ENCODE measurements at regions of chr14 and their contacts with region 1.

Region 1: DNA sequence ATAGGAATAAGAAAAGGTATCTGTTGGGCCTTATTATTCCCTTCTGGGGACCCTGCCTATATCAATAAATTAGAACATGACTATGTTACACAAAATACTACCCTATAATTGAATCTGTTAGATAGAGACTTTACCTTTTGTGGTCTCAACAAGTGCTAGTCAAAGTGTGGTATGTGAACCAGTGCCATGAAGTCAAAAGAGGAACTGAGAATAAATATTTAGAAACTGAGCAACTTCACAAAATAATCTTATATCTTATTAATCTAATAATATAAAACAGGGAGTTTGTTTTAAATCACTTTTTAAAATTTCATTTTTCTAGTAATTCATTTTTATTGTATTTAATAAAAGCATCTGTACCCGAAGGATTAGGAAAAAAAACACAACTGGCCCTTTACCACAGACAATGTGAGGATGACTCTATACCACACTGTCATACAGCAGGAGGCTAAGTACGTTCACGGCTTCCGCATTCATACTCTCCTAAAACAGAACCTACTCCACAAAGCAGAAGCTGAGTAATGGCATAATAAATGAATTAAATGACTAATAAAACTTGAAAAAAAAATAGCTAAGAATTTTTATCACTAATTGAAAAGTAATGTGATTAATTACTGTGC is 42.1 kb downstream of the SEC23A start:
- DNase-seq: no peak
- ATAC-seq: peak; percentile 98
- H3K4me3 Mint-ChIP-seq: peak overlapping the region; percentile 47
- H3K27ac Mint-ChIP-seq: peak overlapping the region; percentile 85
- H3K4me1 Mint-ChIP-seq: peaks cover 21% of the 10 kb centered on the region
- H3K27me3 Mint-ChIP-seq: no peaks in the 10 kb centered on the region
- CTCF ChIP-seq: no peak

Region 2: DNA sequence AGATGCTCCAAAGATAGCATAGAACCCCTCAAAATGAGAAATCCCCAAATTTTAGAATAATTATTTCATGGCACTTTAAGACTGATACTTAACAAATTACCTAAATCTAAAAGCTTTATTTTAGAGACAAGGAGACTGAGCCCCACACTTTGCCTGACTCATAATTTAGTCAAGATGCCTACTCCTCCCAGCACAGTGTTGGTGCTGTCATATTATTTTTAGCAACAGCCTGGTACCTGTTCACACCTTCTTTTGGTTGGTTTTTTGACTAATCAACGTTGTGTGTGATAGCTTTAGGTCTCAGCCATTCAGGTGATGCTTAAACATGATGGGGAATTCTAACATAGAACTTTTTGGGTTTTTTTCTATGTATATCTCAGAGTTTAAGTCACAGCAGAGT is 78.1 kb before region 1 on chr14:
- CTCF ChIA-PET with region 1: no interaction called
- POLR2A ChIA-PET with region 1: no interaction called
- intact Hi-C with region 1: no loop called
- DNase-seq: no peak
- ATAC-seq: no peak
- H3K4me3 Mint-ChIP-seq: no peak overlapping the region
- H3K27ac Mint-ChIP-seq: no peak overlapping the region
- H3K4me1 Mint-ChIP-seq: no peaks in the 10 kb centered on the region
- H3K27me3 Mint-ChIP-seq: peaks cover 14% of the 10 kb centered on the region
- CTCF ChIP-seq: no peak

Region 3: DNA sequence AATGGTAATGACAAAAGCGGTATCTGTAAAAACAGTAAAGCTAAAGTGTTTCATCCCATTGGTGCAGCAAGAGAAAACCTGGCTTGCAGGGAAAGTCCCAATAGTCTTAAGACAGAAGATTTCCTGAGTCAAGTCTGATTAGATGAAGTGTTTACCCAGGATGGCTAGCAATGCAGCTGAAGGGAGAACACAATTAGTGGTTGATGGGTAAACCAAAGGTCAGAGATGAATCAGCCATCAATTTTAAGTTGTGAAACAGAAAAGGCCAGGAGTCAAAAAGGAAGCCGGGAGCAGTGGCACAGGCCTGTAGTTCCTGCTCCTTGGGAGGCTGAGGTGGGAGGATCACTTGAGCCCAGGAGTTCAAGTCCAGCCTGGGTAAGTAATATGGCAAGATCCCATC is 10.5 kb before region 1 on chr14:
- CTCF ChIA-PET with region 1: no interaction called
- POLR2A ChIA-PET with region 1: no interaction called
- intact Hi-C with region 1: loop called (anchors 1 kb)
- DNase-seq: no peak
- ATAC-seq: no peak
- H3K4me3 Mint-ChIP-seq: no peak overlapping the region
- H3K27ac Mint-ChIP-seq: no peak overlapping the region
- H3K4me1 Mint-ChIP-seq: peaks cover 3% of the 10 kb centered on the region
- H3K27me3 Mint-ChIP-seq: no peaks in the 10 kb centered on the region
- CTCF ChIP-seq: no peak

Region 4: DNA sequence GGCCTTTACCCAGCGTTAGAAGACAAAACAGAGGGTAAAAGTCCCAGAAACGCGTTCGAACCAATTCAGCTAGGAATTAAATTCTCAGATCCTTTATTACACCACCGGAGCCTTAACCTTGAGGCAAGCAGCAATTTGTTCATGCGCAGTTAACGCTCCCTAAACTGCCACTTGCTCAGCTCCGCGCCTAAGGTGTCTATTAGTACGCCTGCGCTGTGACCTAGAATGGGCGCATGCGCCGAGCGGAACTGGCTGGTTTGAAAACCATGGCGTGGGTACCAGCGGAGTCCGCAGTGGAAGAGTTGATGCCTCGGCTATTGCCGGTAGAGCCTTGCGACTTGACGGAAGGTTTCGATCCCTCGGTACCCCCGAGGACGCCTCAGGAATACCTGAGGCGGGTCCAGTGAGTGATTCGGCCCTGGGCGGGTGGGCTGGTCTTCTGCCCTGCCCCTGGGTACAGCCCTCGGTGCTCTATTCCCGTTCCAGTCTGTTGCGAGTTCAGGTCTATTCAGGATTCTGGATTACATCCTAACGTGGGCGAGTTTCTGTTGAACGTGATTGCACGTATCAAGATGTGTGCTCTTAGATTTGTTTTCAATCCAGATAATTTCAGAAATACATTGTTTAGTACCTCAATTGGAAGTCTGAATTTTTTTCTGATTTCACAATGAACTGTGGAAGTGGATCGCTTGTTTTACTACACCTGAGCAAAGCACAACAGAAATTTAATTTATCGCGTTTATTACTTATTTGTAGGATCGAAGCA is 53.3 kb after region 1 on chr14 and contains the start of gene GEMIN2:
- CTCF ChIA-PET with region 1: no interaction called
- POLR2A ChIA-PET with region 1: no interaction called
- intact Hi-C with region 1: loop called (anchors 2 kb)
- DNase-seq: peak; percentile 83
- ATAC-seq: peak; percentile 99
- H3K4me3 Mint-ChIP-seq: peak within 1 kb of the TSS; percentile 98
- H3K27ac Mint-ChIP-seq: peak within 1 kb of the TSS; percentile 95
- H3K4me1 Mint-ChIP-seq: peaks cover 28% of the 10 kb centered on the region
- H3K27me3 Mint-ChIP-seq: no peaks in the 10 kb centered on the region
- CTCF ChIP-seq: no peak
- total RNA-seq, gene GEMIN2: 12.3 and 12.6 TPM in 2 replicates

Region 5: DNA sequence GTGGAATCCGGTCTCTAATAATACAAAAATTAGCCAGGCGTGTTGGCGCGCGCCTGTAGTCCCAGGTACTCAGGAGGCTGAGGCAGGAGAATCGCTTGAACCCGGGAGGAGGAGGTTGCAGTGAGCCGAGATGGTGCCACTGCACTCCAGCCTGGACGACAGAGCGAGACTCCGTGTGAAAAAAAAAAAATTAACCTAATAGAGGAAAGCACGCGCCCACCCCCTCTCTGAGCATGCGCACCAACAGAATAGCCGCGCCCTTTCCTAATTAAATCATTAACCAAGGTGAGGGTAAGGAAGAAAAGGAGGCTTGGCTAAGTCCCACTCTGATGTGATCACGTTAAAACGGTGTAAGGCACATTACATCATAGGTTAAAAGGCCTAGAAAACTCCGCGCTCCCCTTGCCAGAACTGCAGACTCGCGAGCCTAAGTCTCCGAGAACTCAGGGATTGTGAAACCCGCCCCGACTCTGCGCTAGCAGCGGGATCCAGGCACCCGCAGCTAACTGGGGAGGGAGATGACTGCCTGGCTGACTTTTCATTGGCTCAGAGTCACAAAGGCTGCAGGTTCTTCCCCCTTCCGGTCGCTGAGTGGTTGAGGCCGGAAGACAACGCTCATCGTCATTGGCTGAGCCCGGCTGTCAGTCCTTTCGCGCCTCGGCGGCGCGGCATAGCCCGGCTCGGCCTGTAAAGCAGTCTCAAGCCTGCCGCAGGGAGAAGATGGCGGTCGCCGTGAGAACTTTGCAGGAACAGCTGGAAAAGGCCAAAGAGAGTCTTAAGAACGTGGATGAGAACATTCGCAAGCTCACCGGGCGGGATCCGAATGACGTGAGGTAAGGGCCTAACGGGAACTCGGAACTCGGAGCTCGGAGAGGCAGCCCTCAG is 113.9 kb after region 1 on chr14 and contains the start of gene PNN:
- CTCF ChIA-PET with region 1: no interaction called
- POLR2A ChIA-PET with region 1: interaction called, 8 read pairs
- intact Hi-C with region 1: loop called (anchors 1 kb)
- DNase-seq: peak; percentile 87
- ATAC-seq: peak; percentile 82
- H3K4me3 Mint-ChIP-seq: peak within 1 kb of the TSS; percentile 99
- H3K27ac Mint-ChIP-seq: peak within 1 kb of the TSS; percentile 99
- H3K4me1 Mint-ChIP-seq: peaks cover 41% of the 10 kb centered on the region
- H3K27me3 Mint-ChIP-seq: no peaks in the 10 kb centered on the region
- CTCF ChIP-seq: no peak
- total RNA-seq, gene PNN: 102 and 109 TPM in 2 replicates